ENCODE measurements at regions of chr19 and their contacts with region 1.

Region 1: DNA sequence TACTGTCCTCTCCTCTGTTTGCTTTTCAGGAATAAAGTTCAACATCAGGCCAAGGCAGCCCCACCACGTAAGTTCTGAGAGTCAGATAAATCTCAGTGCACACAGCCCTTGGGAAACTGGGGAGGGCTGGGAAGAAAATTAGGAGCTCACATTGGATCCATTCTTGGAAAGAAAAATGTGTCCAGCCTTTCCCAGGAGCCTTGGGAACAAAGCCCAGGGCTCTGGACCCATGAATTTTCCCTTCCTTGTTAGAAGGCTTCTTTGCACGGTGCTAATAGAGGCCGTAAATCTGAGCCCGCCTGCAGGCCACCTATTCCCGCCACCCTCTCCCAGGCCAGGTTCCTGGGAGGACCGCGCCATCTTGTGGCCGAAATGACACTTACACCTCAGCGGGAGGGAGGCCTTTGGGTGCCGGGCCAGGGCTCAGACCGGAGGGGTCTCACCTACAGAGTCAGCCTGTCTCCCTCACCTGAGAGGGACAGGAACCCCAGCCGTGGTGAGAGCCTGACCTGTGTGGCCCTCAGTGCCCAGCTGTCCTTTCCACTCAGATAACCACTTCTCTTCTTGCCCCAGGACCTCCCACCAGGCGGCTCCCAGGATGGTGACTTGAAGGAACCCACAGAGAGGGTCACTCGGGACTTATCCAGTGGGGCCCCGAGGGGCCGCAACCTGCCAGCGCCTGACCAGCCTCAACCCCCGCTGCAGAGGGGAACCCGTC is 25.1 kb upstream of the KCTD15 start:
- H3K4me3 Mint-ChIP-seq: no peak overlapping the region
- H3K27ac Mint-ChIP-seq: no peak overlapping the region
- H3K4me1 Mint-ChIP-seq: no peaks in the 10 kb centered on the region
- H3K27me3 Mint-ChIP-seq: no peaks in the 10 kb centered on the region

Region 2: DNA sequence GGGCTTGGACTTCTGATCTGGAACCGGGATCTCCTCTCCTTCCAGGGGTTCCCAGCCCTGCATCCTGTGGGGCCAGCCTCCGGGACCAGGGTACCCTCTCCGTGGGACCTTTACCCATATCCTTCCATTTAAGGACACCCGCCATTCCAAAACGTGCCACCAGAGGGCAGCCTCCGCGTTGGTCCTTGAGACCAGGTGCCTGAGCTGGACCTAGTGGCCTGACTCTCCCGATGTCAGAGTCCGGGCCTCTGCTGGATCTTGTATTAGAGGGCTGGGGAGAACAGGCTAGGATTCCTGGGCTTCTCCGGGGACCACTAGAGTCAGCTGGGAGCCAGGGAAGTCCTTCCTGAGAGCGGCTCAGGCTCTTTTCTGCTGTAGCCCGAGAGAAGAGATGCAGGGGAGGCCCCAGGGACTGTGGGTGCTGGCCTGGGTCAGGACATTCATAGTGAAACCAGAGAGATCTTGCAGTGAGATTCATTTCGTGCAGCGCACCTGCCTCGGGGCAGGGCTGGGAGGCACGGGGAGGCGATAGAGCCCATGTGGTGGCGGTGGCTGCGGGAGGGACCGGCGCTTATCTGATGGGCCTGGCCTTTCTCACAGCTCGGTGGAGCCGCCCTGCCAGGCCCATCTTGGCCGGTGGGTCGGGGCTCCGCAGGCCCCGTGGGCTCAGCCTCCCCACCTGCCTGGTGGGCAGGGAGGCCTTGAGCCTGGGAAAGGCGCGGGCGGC is 536.1 kb before region 1 on chr19:
- intact Hi-C with region 1: loop called (anchors 1 kb)
- H3K4me3 Mint-ChIP-seq: no peak overlapping the region
- H3K27ac Mint-ChIP-seq: no peak overlapping the region
- H3K4me1 Mint-ChIP-seq: peaks cover 24% of the 10 kb centered on the region
- H3K27me3 Mint-ChIP-seq: peaks cover 4% of the 10 kb centered on the region

Region 3: GRCh38 chr19:33430674-33431277 is 340.8 kb before region 1 on chr19:
- intact Hi-C with region 1: loop called (anchors 1 kb)
- H3K4me3 Mint-ChIP-seq: no peak overlapping the region
- H3K27ac Mint-ChIP-seq: no peak overlapping the region
- H3K4me1 Mint-ChIP-seq: peaks cover 4% of the 10 kb centered on the region
- H3K27me3 Mint-ChIP-seq: peaks cover 6% of the 10 kb centered on the region